Endothelial cell of umbilical vein (primary cell): ENCODE measurements at regions of chr6 and their contacts with region 1.

Region 1: GRCh38 chr6:150891888-150892485 is 26.5 kb downstream of the MTHFD1L start:
- DNase-seq: peak; percentile 90
- H3K4me3 ChIP-seq: no peak overlapping the region
- H3K27ac ChIP-seq: peak overlapping the region; percentile 8
- H3K4me1 ChIP-seq: peaks cover 2% of the 10 kb centered on the region
- H3K27me3 ChIP-seq: no peaks in the 10 kb centered on the region
- CTCF ChIP-seq: peak; percentile 78 to 82
- POLR2A ChIP-seq: no peak

Region 2: DNA sequence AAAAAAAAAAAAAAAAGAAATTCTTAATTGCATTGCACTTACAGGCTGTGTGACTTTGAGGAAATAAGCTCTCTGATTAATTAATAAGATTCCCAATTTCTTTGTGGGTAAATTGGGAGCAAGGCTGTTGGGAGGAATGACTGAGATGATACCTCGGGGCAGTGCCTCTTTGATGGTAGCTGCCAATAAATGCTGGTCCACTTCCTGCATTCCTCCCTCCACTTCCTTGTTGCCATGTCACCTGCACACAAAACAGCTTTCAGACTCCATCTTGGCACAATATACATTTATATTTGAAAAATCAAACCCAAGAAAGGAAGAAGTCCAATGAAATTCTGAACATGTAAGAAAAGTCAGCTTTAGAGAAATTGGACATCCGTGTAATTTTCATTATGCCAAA is 18.6 kb after region 1 on chr6:
- CTCF ChIA-PET with region 1: interaction called, 20 read pairs
- POLR2A ChIA-PET with region 1: no interaction called
- dilution Hi-C with region 1: no loop called
- intact Hi-C with region 1: no loop called
- DNase-seq: no peak
- H3K4me3 ChIP-seq: no peak overlapping the region
- H3K27ac ChIP-seq: no peak overlapping the region
- H3K4me1 ChIP-seq: no peaks in the 10 kb centered on the region
- H3K27me3 ChIP-seq: no peaks in the 10 kb centered on the region
- CTCF ChIP-seq: no peak
- POLR2A ChIP-seq: no peak

Region 3: DNA sequence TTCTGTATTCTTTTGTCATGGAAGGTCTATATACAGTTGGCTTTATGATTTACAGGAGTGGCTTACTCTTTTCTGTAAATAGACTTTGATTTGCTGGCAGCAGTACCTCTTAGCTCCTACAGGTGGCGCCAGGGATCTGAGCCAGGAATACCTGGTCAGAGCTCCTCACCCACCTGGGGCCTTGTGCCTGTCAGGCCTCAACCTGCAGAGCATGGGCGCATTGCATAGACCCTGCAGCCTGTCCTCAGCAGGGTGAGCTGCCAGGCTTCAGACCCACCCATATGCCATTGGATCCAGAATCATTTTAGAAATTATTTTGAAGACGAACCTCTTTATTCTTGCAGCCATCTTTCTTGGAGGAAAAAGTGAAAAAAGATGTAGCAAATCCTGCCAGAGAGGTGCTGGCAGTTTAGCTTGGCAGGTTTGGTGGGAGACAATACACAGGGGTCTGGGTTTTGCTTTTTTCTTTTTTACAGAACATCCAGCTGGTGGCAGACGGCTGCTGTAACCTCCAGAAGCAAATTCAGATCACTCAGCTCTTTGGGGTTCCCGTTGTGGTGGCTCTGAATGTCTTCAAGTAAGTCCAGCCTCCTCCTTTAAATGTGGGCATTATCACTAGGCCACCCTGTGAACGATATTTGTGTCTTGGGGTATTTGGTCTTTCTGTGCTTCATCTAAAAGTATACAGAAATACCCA is 122.6 kb after region 1 on chr6:
- CTCF ChIA-PET with region 1: interaction called, 34 read pairs
- POLR2A ChIA-PET with region 1: no interaction called
- dilution Hi-C with region 1: no loop called
- intact Hi-C with region 1: loop called (anchors 1 kb)
- DNase-seq: peak; percentile 80
- H3K4me3 ChIP-seq: no peak overlapping the region
- H3K27ac ChIP-seq: peak overlapping the region; percentile 90
- H3K4me1 ChIP-seq: peaks cover 35% of the 10 kb centered on the region
- H3K27me3 ChIP-seq: no peaks in the 10 kb centered on the region
- CTCF ChIP-seq: peak; percentile 91 to 94
- POLR2A ChIP-seq: no peak

Region 4: DNA sequence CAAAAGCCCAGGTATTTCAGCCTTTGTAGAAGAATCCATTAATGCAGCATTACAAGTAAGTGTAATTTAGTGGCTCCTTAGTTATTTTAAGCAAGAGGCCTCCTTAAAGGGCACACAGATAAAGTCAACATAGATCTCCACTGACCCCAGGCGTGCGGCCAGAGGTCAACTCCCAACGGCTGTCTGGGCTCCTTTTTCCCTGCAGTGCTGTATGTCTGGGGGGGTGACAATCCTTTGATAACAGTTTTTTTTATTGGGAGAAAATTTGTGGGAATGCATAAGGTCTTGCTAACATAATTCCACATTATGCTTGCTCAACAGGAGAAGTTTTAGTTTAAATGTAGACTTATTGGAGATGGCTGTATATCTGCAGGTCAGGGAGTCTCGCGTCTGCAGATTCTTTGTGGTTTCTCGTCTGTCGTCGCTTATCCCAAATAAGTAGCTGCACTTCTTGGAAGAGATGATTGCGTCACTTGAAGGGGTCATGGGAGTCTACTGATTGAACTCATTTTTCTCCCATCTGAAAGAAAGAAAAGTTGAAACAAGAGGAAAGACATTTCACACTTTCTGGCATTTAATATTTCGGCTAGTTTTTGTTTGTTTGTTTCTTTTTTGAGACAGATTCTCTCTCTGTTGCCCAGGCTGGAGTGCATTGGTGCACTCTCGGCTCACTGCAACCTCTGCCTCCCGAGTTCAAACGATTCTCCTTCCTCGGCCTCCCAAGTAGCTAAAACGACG is 196.0 kb after region 1 on chr6:
- CTCF ChIA-PET with region 1: no interaction called
- POLR2A ChIA-PET with region 1: no interaction called
- dilution Hi-C with region 1: no loop called
- intact Hi-C with region 1: no loop called
- DNase-seq: no peak
- H3K4me3 ChIP-seq: no peak overlapping the region
- H3K27ac ChIP-seq: no peak overlapping the region
- H3K4me1 ChIP-seq: peaks cover 15% of the 10 kb centered on the region
- H3K27me3 ChIP-seq: no peaks in the 10 kb centered on the region
- CTCF ChIP-seq: no peak
- POLR2A ChIP-seq: no peak

Region 5: DNA sequence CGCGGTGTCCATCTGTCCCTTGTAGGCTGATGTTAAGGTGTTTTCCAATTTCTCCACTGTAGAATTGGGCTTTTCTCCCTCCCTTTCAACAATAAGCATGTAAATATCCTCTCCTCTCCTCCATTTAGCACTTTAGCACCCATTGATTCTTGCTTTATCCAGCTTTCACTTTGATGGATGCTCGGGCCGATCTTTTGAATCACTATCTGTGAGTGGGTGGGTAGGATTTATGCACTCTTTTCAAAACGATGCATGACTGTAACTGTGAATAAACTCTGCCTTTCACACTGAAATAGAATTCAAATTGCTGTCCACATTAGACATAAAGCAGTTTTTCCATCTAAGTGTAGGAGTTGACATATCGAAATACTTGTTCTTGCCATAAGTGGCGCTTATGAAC is 446.8 kb after region 1 on chr6:
- CTCF ChIA-PET with region 1: interaction called, 233 read pairs
- POLR2A ChIA-PET with region 1: no interaction called
- dilution Hi-C with region 1: no loop called
- intact Hi-C with region 1: loop called (anchors 1 kb)
- DNase-seq: no peak
- H3K4me3 ChIP-seq: no peak overlapping the region
- H3K27ac ChIP-seq: no peak overlapping the region
- H3K4me1 ChIP-seq: no peaks in the 10 kb centered on the region
- H3K27me3 ChIP-seq: no peaks in the 10 kb centered on the region
- CTCF ChIP-seq: no peak
- POLR2A ChIP-seq: no peak

Region 6: GRCh38 chr6:151390276-151391032 is 498.5 kb after region 1 on chr6:
- CTCF ChIA-PET with region 1: interaction called, 4 read pairs
- POLR2A ChIA-PET with region 1: no interaction called
- dilution Hi-C with region 1: no loop called
- intact Hi-C with region 1: loop called (anchors 5 kb)
- DNase-seq: peak; percentile 99
- H3K4me3 ChIP-seq: peak overlapping the region; percentile 17 to 93 (median 86)
- H3K27ac ChIP-seq: peak overlapping the region; percentile 94
- H3K4me1 ChIP-seq: peaks cover 28% of the 10 kb centered on the region
- H3K27me3 ChIP-seq: no peaks in the 10 kb centered on the region
- CTCF ChIP-seq: peak in 1 of 2 donors; percentile 4
- POLR2A ChIP-seq: peak; percentile 80